ENCODE measurements at regions of chr9 and their contacts with region 1.

Region 1: DNA sequence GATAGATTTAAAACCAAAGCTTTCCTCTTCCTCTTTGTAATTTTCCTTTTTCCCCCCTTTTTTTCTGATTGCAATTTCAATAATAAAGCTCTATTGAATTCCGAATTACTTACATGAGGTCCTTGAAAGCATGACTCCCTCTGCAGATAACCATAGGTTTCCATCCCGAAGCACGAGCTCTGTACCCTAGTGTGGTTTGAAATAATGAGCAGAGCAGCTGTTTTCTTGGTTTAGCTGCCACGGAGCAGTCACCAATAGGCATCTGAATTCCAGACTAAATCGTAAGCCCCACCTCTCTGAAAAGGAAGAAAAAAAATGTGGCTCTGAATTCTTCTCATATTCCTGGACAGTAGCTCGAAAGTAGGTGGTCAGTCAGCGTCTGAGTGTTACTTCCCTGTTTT is 18.5 kb upstream of the GNE start:
- DNase-seq: peak; percentile 68 to 74
- H3K4me3 ChIP-seq: peak overlapping the region; percentile 42
- H3K4me3 Mint-ChIP-seq: peak overlapping the region; percentile 72
- H3K27ac Mint-ChIP-seq: peak overlapping the region; percentile 45
- H3K4me1 ChIP-seq: peaks cover 30% of the 10 kb centered on the region
- H3K4me1 Mint-ChIP-seq: peaks cover 25% of the 10 kb centered on the region
- H3K27me3 ChIP-seq: no peaks in the 10 kb centered on the region
- H3K27me3 Mint-ChIP-seq: no peaks in the 10 kb centered on the region
- CTCF ChIP-seq: no peak

Region 2: GRCh38 chr9:36258208-36258988 is 18.4 kb before region 1 on chr9 and contains the start of gene GNE:
- CTCF ChIA-PET with region 1: interaction called, 6 read pairs
- POLR2A ChIA-PET with region 1: interaction called, 13 read pairs
- intact Hi-C with region 1: no loop called
- DNase-seq: peak; percentile 96
- H3K4me3 ChIP-seq: peak within 1 kb of the TSS; percentile 78
- H3K4me3 Mint-ChIP-seq: peak within 1 kb of the TSS; percentile 91
- H3K27ac Mint-ChIP-seq: peak within 1 kb of the TSS; percentile 90
- H3K4me1 ChIP-seq: no peaks in the 10 kb centered on the region
- H3K4me1 Mint-ChIP-seq: no peaks in the 10 kb centered on the region
- H3K27me3 ChIP-seq: no peaks in the 10 kb centered on the region
- H3K27me3 Mint-ChIP-seq: no peaks in the 10 kb centered on the region
- CTCF ChIP-seq: no peak
- total RNA-seq, gene GNE: 15.2 and 18.7 TPM in 2 replicates

Region 3: GRCh38 chr9:36290996-36291395 is 14.2 kb after region 1 on chr9:
- CTCF ChIA-PET with region 1: interaction called, 3 read pairs
- POLR2A ChIA-PET with region 1: no interaction called
- intact Hi-C with region 1: loop called (anchors 2 kb)
- DNase-seq: no peak
- H3K4me3 ChIP-seq: no peak overlapping the region
- H3K4me3 Mint-ChIP-seq: no peak overlapping the region
- H3K27ac Mint-ChIP-seq: no peak overlapping the region
- H3K4me1 ChIP-seq: peaks cover 20% of the 10 kb centered on the region
- H3K4me1 Mint-ChIP-seq: peaks cover 47% of the 10 kb centered on the region
- H3K27me3 ChIP-seq: no peaks in the 10 kb centered on the region
- H3K27me3 Mint-ChIP-seq: no peaks in the 10 kb centered on the region
- CTCF ChIP-seq: no peak

Region 4: GRCh38 chr9:36319806-36320205 is 43.0 kb after region 1 on chr9:
- CTCF ChIA-PET with region 1: interaction called, 4 read pairs
- POLR2A ChIA-PET with region 1: interaction called, 13 read pairs
- intact Hi-C with region 1: loop called (anchors 1 kb)
- DNase-seq: peak; percentile 91 to 95
- H3K4me3 ChIP-seq: no peak overlapping the region
- H3K4me3 Mint-ChIP-seq: peak overlapping the region; percentile 62
- H3K27ac Mint-ChIP-seq: peak overlapping the region; percentile 97
- H3K4me1 ChIP-seq: peaks cover 63% of the 10 kb centered on the region
- H3K4me1 Mint-ChIP-seq: peaks cover 29% of the 10 kb centered on the region
- H3K27me3 ChIP-seq: no peaks in the 10 kb centered on the region
- H3K27me3 Mint-ChIP-seq: no peaks in the 10 kb centered on the region
- CTCF ChIP-seq: no peak

Region 5: DNA sequence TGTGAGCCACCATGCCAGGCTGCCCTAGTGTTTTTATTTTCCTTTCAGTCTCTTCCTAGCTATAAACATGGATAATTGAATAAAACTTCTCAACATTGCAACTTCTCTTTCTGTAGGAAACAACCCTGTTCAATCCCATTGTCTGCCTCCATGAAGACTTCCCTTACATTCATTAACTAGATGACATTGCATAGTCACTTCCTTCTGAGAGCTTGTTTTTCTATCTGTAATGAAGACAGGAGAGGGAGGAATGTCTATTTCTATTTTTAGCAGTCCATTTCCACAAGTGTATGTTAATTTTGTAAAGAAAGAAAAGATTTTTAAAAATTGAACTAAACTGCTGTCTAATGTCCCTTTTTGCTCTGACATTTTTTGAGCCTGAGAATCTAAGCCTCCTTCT is 240.3 kb after region 1 on chr9:
- CTCF ChIA-PET with region 1: no interaction called
- POLR2A ChIA-PET with region 1: no interaction called
- intact Hi-C with region 1: no loop called
- DNase-seq: no peak
- H3K4me3 ChIP-seq: no peak overlapping the region
- H3K4me3 Mint-ChIP-seq: no peak overlapping the region
- H3K27ac Mint-ChIP-seq: no peak overlapping the region
- H3K4me1 ChIP-seq: no peaks in the 10 kb centered on the region
- H3K4me1 Mint-ChIP-seq: no peaks in the 10 kb centered on the region
- H3K27me3 ChIP-seq: no peaks in the 10 kb centered on the region
- H3K27me3 Mint-ChIP-seq: no peaks in the 10 kb centered on the region
- CTCF ChIP-seq: no peak